Left ventricle myocardium inferior (tissue), 1 donor: ENCODE measurements at regions of chr9 and their contacts with region 1.

Region 1: DNA sequence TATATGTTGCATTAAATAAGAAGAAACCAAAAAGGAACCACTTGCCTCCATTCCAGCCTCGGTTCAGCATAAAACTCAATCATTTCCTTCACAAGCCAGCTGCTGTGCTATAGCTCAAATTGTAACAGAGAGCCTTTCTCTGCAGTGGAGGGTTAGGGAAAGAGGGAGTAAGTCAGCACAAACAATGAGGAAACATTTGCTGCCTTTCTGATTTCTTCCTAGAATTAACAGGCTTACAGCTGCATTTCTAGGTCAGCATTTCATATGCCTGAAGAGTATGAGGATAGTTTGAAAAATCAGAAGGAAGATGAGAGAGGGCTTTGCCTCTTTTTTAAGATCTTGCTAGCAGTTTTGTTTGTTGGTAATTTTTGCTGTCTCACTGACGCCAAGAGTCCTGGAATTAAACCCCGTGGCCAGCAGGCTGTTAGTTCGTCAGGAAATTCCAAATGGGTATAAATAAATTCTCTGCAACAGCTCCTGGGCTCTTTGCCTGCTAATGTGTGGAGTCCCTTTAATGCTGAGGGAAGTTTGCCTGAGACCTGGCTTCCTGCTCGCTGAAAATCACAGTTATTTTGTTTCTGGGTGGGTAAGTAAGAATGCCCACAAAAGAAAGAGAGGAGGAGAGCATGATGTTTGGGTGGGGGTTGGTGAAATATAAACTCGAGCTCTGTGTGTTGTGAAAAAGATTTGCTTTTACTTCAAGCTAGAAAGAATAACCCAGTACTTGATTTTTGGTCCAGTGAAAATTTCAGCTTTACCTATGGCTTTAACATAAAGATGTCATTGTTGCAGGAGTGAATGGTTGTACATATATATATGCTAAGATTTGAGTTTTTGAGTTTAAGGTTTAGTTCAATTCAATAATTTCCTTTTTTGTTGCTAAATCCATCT is 148.1 kb upstream of the DMRT1 start:
- DNase-seq: peak; percentile 28
- H3K4me3 ChIP-seq: peak overlapping the region; percentile 64
- H3K27ac ChIP-seq: peak overlapping the region; percentile 97
- H3K4me1 ChIP-seq: peaks cover 99% of the 10 kb centered on the region
- H3K27me3 ChIP-seq: no peaks in the 10 kb centered on the region
- CTCF ChIP-seq: peak; percentile 8

Region 2: DNA sequence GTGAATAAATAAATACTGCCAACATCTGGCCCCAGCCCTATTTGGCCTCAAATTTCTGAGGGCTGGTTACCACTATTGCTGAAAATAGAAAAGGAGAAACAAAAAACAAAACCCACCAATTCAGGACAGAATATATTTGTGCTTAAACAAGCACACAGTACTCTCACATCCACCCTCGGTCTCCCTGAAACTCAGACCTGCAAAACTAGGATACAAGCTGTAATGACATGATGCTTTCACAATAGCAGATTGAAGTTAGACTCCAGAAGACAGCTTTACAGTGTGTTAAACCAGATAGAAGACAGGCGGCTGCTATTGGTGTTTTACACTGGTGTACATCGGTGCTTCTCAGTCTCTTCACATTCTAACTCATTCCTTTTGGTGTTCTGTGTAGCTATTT is 66.8 kb before region 1 on chr9:
- intact Hi-C with region 1: loop called (anchors 5 kb)
- DNase-seq: no peak
- H3K4me3 ChIP-seq: peak overlapping the region; percentile 37
- H3K27ac ChIP-seq: peak overlapping the region; percentile 56
- H3K4me1 ChIP-seq: peaks cover 82% of the 10 kb centered on the region
- H3K27me3 ChIP-seq: no peaks in the 10 kb centered on the region
- CTCF ChIP-seq: no peak

Region 3: DNA sequence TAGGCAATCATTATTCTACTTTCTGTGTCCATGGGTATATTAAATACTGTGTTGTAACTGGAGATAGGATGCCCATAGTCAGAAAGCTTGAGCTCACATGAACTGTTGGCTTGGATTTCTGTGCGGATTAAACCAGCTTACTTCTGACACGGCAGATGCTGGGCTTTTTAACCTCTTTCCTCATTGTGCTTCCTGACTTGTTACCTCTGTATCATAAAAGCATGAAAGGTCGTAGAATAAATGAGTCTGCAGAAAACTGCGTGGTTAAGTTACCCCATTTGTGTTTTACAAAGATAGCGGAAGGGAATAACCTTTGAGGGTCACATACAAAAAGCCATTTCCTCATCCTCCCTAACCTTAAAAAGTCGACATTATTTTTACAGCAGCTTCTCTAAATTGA is 51.4 kb before region 1 on chr9:
- intact Hi-C with region 1: no loop called
- DNase-seq: no peak
- H3K4me3 ChIP-seq: no peak overlapping the region
- H3K27ac ChIP-seq: peak overlapping the region; percentile 70
- H3K4me1 ChIP-seq: peaks cover 59% of the 10 kb centered on the region
- H3K27me3 ChIP-seq: no peaks in the 10 kb centered on the region
- CTCF ChIP-seq: no peak

Region 4: DNA sequence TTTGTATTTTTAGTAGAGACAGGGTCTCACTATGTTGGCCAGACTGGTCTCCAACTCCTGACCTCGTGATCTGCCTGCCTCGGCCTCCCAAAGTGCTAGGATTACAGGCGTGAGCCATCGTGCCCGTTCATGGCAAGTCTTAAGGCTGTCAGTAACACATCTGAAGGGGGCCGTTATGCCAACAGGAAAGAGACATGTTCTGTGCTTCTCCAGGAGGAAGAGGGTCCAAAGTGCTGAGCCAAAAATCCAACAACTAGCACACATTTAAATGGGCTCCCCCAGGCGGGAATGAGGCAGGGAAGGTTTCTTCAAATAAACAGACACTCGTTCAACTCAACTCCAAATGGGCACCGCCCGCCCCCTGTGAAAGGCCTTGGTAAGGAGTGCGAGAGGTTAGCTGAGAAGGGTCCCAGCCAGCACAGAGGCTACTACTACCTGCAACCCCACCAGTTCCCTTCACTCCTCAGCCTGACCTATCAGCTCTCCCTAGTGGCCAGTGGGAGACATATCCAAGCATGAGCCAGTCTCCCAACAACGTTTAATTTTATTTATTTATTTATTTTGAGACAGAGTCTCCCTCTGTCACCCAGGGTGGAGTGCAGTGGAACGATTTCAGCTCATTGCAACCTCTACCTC is 63.9 kb after region 1 on chr9:
- intact Hi-C with region 1: loop called (anchors 10 kb)
- DNase-seq: no peak
- H3K4me3 ChIP-seq: no peak overlapping the region
- H3K27ac ChIP-seq: no peak overlapping the region
- H3K4me1 ChIP-seq: peaks cover 35% of the 10 kb centered on the region
- H3K27me3 ChIP-seq: no peaks in the 10 kb centered on the region
- CTCF ChIP-seq: peak; percentile 71